GM10248 (cell line): ENCODE measurements at regions of chr14 and their contacts with region 1.

Region 1: GRCh38 chr14:59897761-59898383 is 22.1 kb upstream of the LRRC9 start:
- DNase-seq: peak; percentile 13
- CTCF ChIP-seq: peak; percentile 17

Region 2: DNA sequence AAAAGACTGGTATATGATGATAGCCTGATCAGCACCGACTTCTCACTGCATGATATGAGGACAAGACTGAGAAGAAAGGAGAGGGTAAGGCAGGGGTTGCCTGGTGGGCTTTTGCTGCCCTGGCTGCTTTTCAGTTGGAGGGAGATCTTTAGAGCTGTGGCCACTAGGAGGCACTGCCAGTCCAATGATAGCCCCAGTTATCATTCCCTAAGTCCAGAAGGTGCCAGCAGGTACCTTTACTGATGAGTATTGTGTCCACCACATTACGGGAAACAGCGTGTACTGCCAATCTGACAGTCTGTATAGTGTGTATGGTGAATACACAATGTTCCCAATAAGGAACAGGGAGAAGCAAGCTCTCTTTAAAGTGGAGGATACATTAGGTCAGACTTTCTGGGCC is 265.5 kb before region 1 on chr14:
- CTCF ChIA-PET with region 1: interaction called, 22 read pairs
- POLR2A ChIA-PET with region 1: no interaction called
- DNase-seq: peak; percentile 48
- CTCF ChIP-seq: peak; percentile 37

Region 3: DNA sequence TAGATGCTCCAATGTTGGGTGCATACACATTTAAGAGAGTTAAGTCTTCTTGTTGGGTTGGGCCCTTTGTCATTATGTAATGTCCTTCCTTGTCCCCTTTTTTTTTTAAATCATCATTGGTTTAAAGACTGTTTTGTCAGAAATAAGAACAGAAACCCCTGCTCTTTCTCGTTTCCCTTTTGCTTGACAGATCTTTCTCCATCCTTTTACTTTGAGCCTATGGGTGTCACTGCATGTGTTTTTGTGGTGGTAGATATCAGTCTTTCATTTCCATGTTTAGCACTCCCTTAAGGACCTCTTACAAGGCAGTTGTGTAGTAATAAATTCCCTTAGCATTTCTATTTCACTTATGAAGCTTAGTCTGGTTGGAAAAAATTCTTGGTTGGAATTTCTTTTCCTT is 74.7 kb before region 1 on chr14:
- CTCF ChIA-PET with region 1: no interaction called
- POLR2A ChIA-PET with region 1: no interaction called
- DNase-seq: no peak
- CTCF ChIP-seq: no peak

Region 4: DNA sequence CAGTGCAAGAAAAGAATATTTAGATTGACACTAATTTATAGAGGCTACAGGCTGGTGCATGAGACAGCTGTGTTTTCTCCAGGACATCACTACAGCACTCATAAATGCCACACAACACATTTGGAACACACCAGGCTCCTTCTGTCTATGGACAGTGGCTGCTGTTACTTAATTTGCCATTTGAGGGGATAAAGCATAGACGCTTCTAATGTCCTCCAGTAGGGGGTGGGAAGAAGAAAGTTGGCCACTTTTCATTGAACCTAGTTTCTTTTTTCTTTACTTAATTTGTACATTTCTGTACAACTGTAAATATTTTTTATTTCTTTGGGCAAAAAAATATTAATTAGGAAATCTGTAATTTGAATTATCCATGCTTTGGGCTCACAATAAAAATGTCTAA is 14.9 kb before region 1 on chr14:
- CTCF ChIA-PET with region 1: interaction called, 10 read pairs
- POLR2A ChIA-PET with region 1: no interaction called
- DNase-seq: no peak
- CTCF ChIP-seq: no peak

Region 5: DNA sequence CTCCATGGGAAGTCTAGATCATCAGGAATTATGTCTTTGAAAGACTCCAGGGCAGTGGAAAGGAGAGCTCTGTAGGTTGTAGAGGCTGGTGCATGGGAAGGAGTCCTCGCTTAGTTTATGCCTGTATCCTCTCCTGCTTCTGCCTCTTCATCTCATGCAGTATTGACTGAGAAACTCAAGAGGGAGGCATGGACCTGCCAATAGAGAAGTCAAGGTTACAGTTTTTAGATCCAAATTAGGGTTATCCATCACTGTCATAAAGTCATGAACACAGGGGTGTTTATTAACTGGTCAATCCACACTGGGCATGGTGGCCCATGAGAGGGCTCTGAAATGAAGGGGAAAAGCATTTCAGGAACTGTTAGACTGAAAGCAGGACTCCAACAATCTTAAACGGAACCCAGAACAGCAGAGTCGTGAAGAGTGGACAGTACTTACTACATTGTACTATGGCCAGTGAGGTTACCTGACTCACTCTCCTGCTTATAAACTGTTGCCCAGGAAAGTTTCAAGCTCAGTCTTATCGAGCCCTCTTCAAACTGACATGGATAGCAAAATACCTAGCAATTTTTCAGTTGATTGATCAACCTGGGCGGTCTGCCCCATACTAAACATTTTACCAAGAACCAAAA is 297.4 kb after region 1 on chr14:
- CTCF ChIA-PET with region 1: no interaction called
- POLR2A ChIA-PET with region 1: no interaction called
- DNase-seq: no peak
- CTCF ChIP-seq: peak; percentile 56